ENCODE measurements at regions of chr5 and their contacts with region 1.

Region 1: GRCh38 chr5:152142840-152143469 is 218.3 kb upstream of the GLRA1 start:
- DNase-seq: peak; percentile 45 to 60
- ATAC-seq: peak; percentile 84 to 96
- H3K4me3 ChIP-seq: no peak overlapping the region
- H3K27ac ChIP-seq: no peak overlapping the region
- H3K4me1 ChIP-seq: no peaks in the 10 kb centered on the region
- CTCF ChIP-seq: peak; percentile 74
- EP300 ChIP-seq: no peak
- POLR2A ChIP-seq: no peak
- RAD21 ChIP-seq: peak; percentile 67 to 72

Region 2: GRCh38 chr5:151825445-151825844 is 317.5 kb before region 1 on chr5:
- CTCF ChIA-PET with region 1: interaction called, 79 read pairs
- POLR2A ChIA-PET with region 1: no interaction called
- DNase-seq: peak; percentile 54 to 56
- ATAC-seq: peak; percentile 72 to 86
- H3K4me3 ChIP-seq: no peak overlapping the region
- H3K27ac ChIP-seq: no peak overlapping the region
- H3K4me1 ChIP-seq: no peaks in the 10 kb centered on the region
- CTCF ChIP-seq: peak; percentile 73
- EP300 ChIP-seq: no peak
- POLR2A ChIP-seq: no peak
- RAD21 ChIP-seq: peak; percentile 80 to 82

Region 3: DNA sequence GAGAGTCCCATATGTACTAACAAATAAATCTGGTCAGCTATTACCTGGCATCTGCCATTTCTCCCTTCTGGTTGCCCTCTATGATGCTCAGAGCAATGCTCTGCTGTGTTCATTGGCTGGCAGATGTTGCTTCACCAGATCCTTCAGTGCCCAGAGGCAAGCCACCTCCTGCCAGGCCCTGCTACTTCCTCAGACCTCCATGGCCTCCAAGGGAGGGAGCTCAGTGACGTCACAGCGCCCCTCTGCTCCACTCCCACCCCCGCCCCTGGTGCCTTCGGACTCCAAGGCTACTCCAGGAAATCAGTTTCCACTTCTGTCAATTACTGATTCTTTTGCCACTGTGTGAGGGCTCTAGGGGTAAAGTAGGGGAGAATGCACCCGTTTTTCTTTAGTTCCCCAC is 17.1 kb before region 1 on chr5:
- CTCF ChIA-PET with region 1: interaction called, 12 read pairs
- POLR2A ChIA-PET with region 1: no interaction called
- DNase-seq: no peak
- ATAC-seq: no peak
- H3K4me3 ChIP-seq: no peak overlapping the region
- H3K27ac ChIP-seq: no peak overlapping the region
- H3K4me1 ChIP-seq: no peaks in the 10 kb centered on the region
- CTCF ChIP-seq: no peak
- EP300 ChIP-seq: no peak
- POLR2A ChIP-seq: no peak
- RAD21 ChIP-seq: no peak

Region 4: DNA sequence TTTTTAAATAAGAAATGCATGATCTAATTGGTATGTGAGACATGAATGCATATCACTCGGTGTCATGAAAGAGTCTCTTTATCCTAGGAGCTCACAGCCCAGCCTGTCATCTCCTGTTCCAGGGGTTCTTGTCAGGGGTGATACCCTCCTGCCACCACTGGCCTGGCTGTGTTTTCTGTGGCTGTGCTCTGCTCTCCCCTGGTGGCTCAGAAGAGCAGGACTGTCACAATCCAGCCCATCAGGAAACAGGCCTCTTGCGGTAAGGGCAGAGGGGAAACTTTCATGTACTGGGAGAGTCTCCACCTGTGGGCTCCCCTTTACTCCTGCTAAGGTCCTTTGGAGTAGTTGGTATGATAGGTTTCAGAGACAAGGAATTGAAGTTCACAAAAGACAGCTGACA is 21.9 kb after region 1 on chr5:
- CTCF ChIA-PET with region 1: interaction called, 16 read pairs
- POLR2A ChIA-PET with region 1: no interaction called
- DNase-seq: no peak
- ATAC-seq: peak in 1 of 2 experiments; percentile 46; a peak in 1 of 6 replicates
- H3K4me3 ChIP-seq: no peak overlapping the region
- H3K27ac ChIP-seq: no peak overlapping the region
- H3K4me1 ChIP-seq: no peaks in the 10 kb centered on the region
- CTCF ChIP-seq: no peak
- EP300 ChIP-seq: no peak
- POLR2A ChIP-seq: no peak
- RAD21 ChIP-seq: no peak